Activated CD4-positive, alpha-beta memory T cell treated with anti-CD3 and anti-CD28 coated beads for 36 hours (primary cell): ENCODE measurements at regions of chr19 and their contacts with region 1.

Region 1: GRCh38 chr19:46728693-46729676 is 12.1 kb upstream of the PRKD2 start:
- DNase-seq: peak; percentile 82
- H3K4me3 Mint-ChIP-seq: no peak overlapping the region
- H3K27ac Mint-ChIP-seq: no peak overlapping the region
- H3K4me1 Mint-ChIP-seq: peaks cover 18% of the 10 kb centered on the region
- H3K27me3 Mint-ChIP-seq: no peaks in the 10 kb centered on the region

Region 2: DNA sequence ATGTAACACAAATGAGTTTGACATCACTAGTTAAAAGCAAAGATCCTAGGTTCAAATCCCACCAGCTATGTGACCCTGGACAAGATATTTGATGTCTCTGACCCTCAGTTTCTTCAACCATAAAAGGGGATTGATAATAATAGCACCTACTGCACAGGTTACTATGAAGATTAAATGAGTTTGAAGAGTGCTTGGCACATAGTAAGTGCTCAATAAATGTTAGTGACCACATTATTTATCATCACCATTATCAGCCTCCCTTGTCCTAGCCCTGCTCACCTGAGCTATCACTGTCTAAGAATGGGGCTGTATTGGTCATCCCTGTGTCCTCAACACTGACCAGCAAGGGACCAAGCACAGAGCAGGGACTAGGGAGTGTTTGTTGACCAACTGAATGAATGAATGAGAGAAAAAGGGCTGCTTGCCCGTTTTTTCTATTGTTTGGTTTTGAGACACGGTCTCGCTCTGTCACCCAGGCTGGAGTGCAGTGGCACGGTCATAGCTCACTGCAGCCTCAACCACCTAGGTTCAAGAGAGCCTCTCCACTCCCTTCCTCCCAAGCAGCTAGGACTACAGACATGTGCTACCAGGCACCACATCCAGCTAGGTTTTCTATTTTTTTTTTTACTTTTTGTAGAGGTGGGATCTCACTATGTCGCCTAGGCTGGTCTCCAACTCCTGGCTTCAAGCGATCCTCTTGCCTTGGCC is 41.4 kb before region 1 on chr19:
- CTCF ChIA-PET with region 1: interaction called, 14 read pairs
- POLR2A ChIA-PET with region 1: interaction called, 3 read pairs
- intact Hi-C with region 1: no loop called
- DNase-seq: no peak
- H3K4me3 Mint-ChIP-seq: no peak overlapping the region
- H3K27ac Mint-ChIP-seq: no peak overlapping the region
- H3K4me1 Mint-ChIP-seq: no peaks in the 10 kb centered on the region
- H3K27me3 Mint-ChIP-seq: no peaks in the 10 kb centered on the region

Region 3: DNA sequence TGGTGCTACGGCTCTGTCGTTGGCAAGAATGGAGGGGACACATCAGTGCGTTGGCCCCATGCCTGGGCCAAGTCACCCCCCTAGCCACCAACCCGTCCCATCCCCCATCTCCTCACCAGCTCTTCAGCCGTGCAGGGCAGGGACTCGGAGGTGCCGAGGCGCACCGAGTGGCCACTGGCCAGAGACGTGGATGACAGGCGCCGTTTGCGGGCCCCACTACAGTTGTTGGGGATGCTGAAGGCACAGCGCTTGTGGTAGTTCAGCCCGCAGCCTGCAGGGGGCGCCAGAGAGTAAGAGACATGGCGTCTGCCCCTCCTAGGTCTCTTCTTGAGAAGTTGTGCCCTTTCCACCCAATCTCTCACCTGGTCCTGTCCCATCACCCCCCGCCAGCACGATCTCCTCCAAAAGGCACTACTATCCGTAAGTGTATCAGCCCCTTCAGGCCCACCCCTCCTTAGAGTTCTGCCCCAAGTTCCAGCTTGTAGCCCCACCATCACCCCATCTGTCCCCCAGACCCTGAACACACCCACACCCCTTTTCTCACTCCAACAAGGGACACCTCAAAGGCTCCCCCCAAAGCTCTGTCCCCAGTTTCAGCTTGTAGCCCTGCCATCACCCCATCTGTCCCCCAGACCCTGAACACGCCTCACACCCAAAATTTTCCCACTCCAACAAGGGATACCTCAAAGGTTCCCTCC is 24.5 kb before region 1 on chr19:
- CTCF ChIA-PET with region 1: interaction called, 121 read pairs
- POLR2A ChIA-PET with region 1: interaction called, 4 read pairs
- intact Hi-C with region 1: loop called (anchors 1 kb)
- DNase-seq: peak; percentile 91
- H3K4me3 Mint-ChIP-seq: no peak overlapping the region
- H3K27ac Mint-ChIP-seq: peak overlapping the region; percentile 60
- H3K4me1 Mint-ChIP-seq: peaks cover 7% of the 10 kb centered on the region
- H3K27me3 Mint-ChIP-seq: no peaks in the 10 kb centered on the region

Region 4: DNA sequence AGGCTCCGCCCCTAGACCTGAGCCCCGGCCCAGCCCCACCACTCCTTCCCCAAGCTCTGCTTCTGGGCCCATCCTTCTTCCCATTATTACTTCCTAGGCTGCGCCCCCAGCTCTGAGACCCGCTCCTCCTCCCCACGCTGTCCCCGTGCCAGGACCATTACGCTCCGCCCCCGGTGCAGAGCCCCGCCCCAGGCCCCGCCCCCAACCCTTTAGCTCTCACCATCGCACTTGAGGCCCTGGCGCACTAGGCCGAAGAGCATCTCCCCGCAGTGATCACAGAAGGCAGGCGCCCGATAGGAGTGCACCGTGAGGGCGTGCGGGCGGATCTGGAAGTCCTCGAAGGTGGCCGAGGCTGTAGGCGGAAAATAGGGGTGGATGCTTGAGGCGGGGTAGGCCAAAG is 18.3 kb before region 1 on chr19:
- CTCF ChIA-PET with region 1: interaction called, 121 read pairs
- POLR2A ChIA-PET with region 1: interaction called, 4 read pairs
- intact Hi-C with region 1: no loop called
- DNase-seq: no peak
- H3K4me3 Mint-ChIP-seq: no peak overlapping the region
- H3K27ac Mint-ChIP-seq: no peak overlapping the region
- H3K4me1 Mint-ChIP-seq: peaks cover 12% of the 10 kb centered on the region
- H3K27me3 Mint-ChIP-seq: no peaks in the 10 kb centered on the region

Region 5: DNA sequence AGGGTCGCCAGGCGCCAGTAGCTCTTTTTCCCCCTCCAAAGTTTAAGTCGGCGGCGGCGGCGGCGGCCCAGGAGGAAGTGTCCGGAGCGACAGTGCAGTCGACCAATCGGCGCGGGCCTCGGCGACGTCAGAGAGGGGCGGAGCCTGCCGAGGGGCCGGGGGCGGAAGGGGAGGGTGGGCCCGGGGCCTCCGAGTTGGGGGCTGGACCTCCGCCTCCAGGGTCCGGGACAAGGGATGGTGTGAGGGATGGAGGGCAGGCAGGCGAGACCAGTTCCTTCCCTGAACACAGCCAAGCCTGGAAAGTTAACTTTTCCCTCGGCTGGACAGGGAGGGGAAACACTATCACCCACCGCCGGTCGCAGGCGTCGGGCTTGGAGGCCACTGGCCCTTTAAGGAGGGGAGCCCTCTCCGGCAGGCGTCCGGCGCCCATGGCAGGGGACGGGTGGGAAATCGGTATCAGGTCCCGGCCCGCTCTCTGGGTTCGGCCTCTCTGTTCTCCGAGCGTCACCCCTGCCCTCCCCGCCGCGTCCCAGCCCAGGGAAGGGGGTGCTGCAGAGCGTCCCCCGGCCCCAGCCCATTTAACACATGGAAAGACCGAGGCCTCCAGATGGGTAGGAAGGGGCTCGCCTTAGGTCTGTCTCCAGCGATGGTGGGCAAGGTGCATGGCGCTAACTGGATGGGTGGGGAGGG is 11.8 kb before region 1 on chr19 and contains the start of gene PRKD2:
- CTCF ChIA-PET with region 1: interaction called, 15 read pairs
- POLR2A ChIA-PET with region 1: interaction called, 3 read pairs
- intact Hi-C with region 1: no loop called
- DNase-seq: peak; percentile 94
- H3K4me3 Mint-ChIP-seq: peak within 1 kb of the TSS; percentile 93
- H3K27ac Mint-ChIP-seq: peak within 1 kb of the TSS; percentile 95
- H3K4me1 Mint-ChIP-seq: peaks cover 38% of the 10 kb centered on the region
- H3K27me3 Mint-ChIP-seq: no peaks in the 10 kb centered on the region
- total RNA-seq, gene PRKD2: 78.8 to 84.4 TPM

Region 6: DNA sequence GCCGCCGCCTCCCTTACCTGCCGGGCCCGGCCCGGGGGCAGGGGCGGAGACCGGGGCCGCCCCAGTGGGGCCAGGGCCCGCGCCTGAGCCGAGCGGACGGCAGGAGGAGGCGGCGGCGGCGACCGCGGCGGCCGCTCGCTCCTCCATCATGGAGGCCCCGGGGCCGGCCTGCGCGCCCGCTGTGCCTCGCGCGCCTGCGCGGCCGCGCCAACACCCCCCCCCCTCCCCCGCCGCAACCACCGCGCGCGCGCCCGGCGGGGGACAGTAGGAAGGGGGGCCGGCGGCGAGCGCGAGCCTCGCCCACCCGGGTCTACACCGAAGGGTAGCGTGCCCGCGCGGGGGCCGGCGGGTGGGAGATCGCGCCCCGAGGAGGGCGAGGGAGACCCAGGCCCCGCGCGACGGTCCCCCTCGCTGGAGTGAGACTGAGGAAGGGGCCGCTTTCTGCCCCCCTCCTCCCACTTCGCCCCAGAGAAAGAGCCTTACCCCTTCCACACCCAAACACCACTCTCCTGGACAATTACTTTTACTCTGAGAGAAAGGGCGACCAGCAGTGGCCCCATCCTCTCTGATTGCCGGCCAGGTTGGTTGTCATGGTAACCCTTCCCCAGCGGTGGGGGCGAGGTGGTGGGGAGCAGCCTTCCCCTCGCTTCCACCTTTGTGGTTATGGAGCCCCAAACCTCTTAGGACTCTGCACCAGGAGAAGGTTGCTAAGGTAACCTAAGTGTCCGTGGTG is 17.5 kb after region 1 on chr19 and contains the start of gene STRN4:
- CTCF ChIA-PET with region 1: interaction called, 23 read pairs
- POLR2A ChIA-PET with region 1: no interaction called
- intact Hi-C with region 1: no loop called
- DNase-seq: peak; percentile 66
- H3K4me3 Mint-ChIP-seq: peak within 1 kb of the TSS; percentile 94
- H3K27ac Mint-ChIP-seq: peak within 1 kb of the TSS; percentile 83
- H3K4me1 Mint-ChIP-seq: peaks cover 49% of the 10 kb centered on the region
- H3K27me3 Mint-ChIP-seq: no peaks in the 10 kb centered on the region
- total RNA-seq, gene STRN4: 52.6 to 59.3 TPM

Region 7: GRCh38 chr19:46753420-46754155 is 24.6 kb after region 1 on chr19:
- CTCF ChIA-PET with region 1: interaction called, 15 read pairs
- POLR2A ChIA-PET with region 1: no interaction called
- intact Hi-C with region 1: no loop called
- DNase-seq: peak; percentile 83
- H3K4me3 Mint-ChIP-seq: no peak overlapping the region
- H3K27ac Mint-ChIP-seq: no peak overlapping the region
- H3K4me1 Mint-ChIP-seq: peaks cover under 1% of the 10 kb centered on the region
- H3K27me3 Mint-ChIP-seq: no peaks in the 10 kb centered on the region

Region 8: GRCh38 chr19:46932346-46932745 is 203.4 kb after region 1 on chr19:
- CTCF ChIA-PET with region 1: no interaction called
- POLR2A ChIA-PET with region 1: no interaction called
- intact Hi-C with region 1: no loop called
- DNase-seq: no peak
- H3K4me3 Mint-ChIP-seq: no peak overlapping the region
- H3K27ac Mint-ChIP-seq: no peak overlapping the region
- H3K4me1 Mint-ChIP-seq: peaks cover 66% of the 10 kb centered on the region
- H3K27me3 Mint-ChIP-seq: no peaks in the 10 kb centered on the region